Activated naive CD4-positive, alpha-beta T cell treated with anti-CD3 and anti-CD28 coated beads for 36 hours (primary cell): ENCODE measurements at regions of chrX and their contacts with region 1.

Region 1: DNA sequence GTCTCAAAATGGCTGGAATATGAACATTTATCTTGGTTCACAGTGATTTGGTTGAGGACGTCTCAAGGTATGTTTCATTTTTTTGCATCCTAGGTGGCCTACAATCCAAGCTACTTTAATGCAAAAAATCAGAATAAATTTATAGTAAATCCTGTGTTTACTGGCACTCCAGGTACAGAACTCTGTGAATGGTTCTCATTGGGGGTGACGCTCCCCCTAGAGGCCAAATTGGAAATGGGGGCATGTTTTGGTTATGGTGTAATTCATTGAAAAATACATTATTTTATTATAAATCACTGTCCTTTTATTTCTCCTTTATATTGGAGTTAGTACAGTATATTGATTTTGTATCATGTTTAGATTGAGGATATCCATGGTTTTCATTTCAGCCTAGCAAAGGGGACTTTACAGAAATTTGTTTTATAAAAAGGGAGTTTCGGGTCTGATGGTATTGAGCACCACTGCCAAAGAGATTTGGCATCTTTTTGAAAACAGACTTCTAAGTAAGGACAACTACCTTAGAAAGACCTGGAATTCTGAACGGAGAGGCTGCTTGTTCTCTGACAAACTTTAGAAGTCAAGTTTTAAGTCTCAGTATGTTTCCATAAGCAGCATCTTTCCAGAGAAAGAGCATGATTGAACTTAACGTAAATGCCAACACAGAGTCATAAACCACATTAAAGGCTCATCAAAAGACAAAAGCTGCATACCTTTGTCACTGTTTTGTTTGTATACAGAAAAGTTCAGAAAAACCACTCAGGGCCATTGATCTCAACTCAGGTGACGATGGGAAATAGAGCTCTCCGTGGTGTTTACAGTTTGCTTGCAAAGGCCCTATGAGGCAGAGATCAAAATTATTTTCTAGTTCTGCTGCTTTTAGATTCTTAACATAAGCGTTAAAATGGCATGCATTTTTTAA is 19.4 kb downstream of the MTM1 start:
- DNase-seq: peak; percentile 65
- H3K4me3 Mint-ChIP-seq: no peak overlapping the region
- H3K27ac Mint-ChIP-seq: no peak overlapping the region
- H3K4me1 Mint-ChIP-seq: peaks cover 23% of the 10 kb centered on the region
- H3K27me3 Mint-ChIP-seq: no peaks in the 10 kb centered on the region

Region 2: GRCh38 chrX:150449313-150449712 is 138.5 kb before region 1 on chrX:
- CTCF ChIA-PET with region 1: interaction called, 9 read pairs
- intact Hi-C with region 1: loop called (anchors 2 kb)
- DNase-seq: no peak
- H3K4me3 Mint-ChIP-seq: no peak overlapping the region
- H3K27ac Mint-ChIP-seq: no peak overlapping the region
- H3K4me1 Mint-ChIP-seq: peaks cover 13% of the 10 kb centered on the region
- H3K27me3 Mint-ChIP-seq: no peaks in the 10 kb centered on the region